PC-3 (cell line): ENCODE measurements at regions of chr7 and their contacts with region 1.

Region 1: DNA sequence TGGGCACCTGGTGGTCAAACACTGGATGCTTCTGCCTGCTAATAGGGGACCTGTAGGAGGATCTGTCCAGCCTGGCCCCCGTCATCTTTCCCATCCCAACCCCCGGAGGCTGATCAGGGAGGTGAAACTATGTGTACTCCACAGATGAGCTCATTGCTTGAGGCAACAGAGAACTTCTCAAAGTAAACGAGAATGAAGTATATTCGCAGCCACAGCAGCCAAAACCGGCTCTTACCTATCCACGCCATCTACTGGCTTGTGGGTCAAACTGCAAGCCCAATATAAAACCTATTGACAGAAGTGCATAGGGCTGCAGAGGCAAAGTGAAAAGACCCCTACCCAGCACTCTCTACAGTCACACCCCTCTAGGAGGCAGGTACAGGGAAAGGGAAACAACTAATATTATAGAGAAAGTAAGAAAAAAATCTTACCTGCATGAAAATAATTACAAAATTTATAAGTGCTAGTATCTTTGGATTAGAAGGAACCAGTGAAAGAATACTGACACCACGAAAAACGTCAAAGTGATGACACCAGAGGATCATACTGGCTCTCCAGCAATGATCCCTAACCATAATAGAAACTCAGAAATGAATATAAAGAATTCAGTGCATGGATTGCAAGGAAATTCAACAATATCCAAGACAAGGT is 973.5 kb downstream of the ANKRD7 start:
- DNase-seq: peak; percentile 73
- ATAC-seq: peak; percentile 73
- H3K4me3 ChIP-seq: no peak overlapping the region
- H3K27ac ChIP-seq: no peak overlapping the region
- H3K4me1 ChIP-seq: no peaks in the 10 kb centered on the region
- H3K27me3 ChIP-seq: no peaks in the 10 kb centered on the region
- CTCF ChIP-seq: peak; percentile 75

Region 2: GRCh38 chr7:118872568-118872967 is 325.4 kb before region 1 on chr7:
- CTCF ChIA-PET with region 1: interaction called, 4 read pairs
- POLR2A ChIA-PET with region 1: interaction called, 15 read pairs
- intact Hi-C with region 1: no loop called
- DNase-seq: peak; percentile 41
- ATAC-seq: peak; percentile 84
- H3K4me3 ChIP-seq: no peak overlapping the region
- H3K27ac ChIP-seq: no peak overlapping the region
- H3K4me1 ChIP-seq: no peaks in the 10 kb centered on the region
- H3K27me3 ChIP-seq: no peaks in the 10 kb centered on the region
- CTCF ChIP-seq: no peak

Region 3: DNA sequence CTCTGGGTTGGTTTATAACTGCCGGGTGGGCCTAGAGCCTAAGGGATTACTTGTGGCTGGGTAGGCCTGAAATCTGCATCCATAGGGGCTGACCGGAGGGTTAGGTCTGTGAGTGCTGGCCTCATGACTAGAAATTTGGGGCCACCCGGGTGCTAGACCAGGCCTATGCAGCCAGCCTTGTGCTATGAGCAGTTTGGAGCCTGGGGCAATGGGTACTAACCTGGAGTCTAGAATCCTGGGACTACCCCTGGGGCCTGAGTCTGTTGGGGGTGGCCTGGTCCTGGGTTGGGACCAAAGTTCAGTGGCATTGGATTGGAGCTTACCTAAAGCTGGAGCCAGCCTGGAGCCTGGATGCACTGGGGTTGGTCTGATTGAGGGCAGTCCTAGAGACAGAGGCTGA is 21.7 kb after region 1 on chr7:
- CTCF ChIA-PET with region 1: no interaction called
- POLR2A ChIA-PET with region 1: no interaction called
- intact Hi-C with region 1: no loop called
- DNase-seq: no peak
- ATAC-seq: no peak
- H3K4me3 ChIP-seq: no peak overlapping the region
- H3K27ac ChIP-seq: no peak overlapping the region
- H3K4me1 ChIP-seq: no peaks in the 10 kb centered on the region
- H3K27me3 ChIP-seq: no peaks in the 10 kb centered on the region
- CTCF ChIP-seq: no peak

Region 4: DNA sequence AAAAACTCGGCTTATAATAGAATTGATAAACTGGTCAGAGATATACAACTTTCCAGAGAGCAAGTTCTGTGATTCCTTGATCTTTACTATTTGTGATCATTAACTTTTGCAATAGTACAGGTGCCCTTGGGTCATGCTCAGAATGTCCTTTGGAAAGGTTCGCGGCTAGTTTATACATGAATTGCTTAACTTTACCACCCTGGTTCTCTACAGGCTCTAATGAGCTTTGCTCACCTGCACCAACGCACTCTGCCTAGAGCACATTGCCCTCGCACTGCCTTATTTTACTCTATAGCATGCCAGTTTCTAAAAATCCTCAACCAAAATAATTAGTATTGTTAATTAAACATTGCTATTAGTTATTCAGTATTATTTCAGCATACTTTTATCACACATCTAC is 143.8 kb after region 1 on chr7:
- CTCF ChIA-PET with region 1: no interaction called
- POLR2A ChIA-PET with region 1: no interaction called
- intact Hi-C with region 1: no loop called
- DNase-seq: no peak
- ATAC-seq: no peak
- H3K4me3 ChIP-seq: no peak overlapping the region
- H3K27ac ChIP-seq: no peak overlapping the region
- H3K4me1 ChIP-seq: no peaks in the 10 kb centered on the region
- H3K27me3 ChIP-seq: no peaks in the 10 kb centered on the region
- CTCF ChIP-seq: no peak